Activated CD4-positive, alpha-beta T cell treated with anti-CD3 and anti-CD28 coated beads for 36 hours (primary cell): ENCODE measurements at regions of chr11 and their contacts with region 1.

Region 1: GRCh38 chr11:119481021-119481666 is 58.2 kb upstream of the THY1 start:
- DNase-seq: peak; percentile 88
- ATAC-seq: peak; percentile 92
- H3K4me3 Mint-ChIP-seq: no peak overlapping the region
- H3K27ac Mint-ChIP-seq: no peak overlapping the region
- H3K4me1 Mint-ChIP-seq: no peaks in the 10 kb centered on the region
- H3K27me3 Mint-ChIP-seq: peaks cover 21% of the 10 kb centered on the region

Region 2: DNA sequence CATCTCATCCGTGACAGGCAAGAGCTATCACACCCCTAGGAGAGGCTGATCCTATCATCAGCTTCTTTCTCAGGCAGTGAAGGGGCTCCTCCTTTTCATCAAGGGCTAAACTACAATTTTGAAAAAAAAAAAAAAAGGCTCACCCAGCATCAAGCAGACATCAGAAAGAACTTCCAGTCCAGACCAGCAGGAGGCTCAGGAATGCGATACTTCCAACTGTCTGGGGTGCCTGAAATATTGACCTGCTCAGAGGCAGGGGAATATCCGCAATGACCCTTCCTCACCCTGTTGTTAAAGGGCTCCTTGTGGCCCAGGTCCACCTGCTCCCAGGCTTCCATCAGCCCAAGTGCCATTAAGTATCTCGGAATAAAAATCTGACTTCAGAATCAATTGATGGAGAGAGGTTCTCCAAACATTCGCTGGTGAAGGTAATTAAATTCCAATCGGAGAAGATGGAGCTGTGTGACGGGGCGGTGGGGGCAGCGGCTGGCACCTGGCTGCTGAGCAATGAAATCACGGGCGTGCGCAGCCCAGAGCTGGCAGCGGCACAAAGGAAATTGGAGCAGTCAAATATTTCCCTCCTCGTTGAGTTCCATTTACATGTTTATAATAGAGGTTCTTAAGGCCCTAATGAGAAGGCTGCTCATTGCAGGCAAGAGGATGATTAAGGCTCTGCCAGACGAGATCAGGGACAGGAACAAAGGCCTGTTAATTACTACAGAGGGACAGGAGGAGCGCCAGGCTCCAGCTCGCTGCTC is 10.8 kb after region 1 on chr11:
- CTCF ChIA-PET with region 1: no interaction called
- POLR2A ChIA-PET with region 1: no interaction called
- intact Hi-C with region 1: no loop called
- DNase-seq: no peak
- ATAC-seq: no peak
- H3K4me3 Mint-ChIP-seq: no peak overlapping the region
- H3K27ac Mint-ChIP-seq: no peak overlapping the region
- H3K4me1 Mint-ChIP-seq: no peaks in the 10 kb centered on the region
- H3K27me3 Mint-ChIP-seq: peaks cover 3% of the 10 kb centered on the region

Region 3: DNA sequence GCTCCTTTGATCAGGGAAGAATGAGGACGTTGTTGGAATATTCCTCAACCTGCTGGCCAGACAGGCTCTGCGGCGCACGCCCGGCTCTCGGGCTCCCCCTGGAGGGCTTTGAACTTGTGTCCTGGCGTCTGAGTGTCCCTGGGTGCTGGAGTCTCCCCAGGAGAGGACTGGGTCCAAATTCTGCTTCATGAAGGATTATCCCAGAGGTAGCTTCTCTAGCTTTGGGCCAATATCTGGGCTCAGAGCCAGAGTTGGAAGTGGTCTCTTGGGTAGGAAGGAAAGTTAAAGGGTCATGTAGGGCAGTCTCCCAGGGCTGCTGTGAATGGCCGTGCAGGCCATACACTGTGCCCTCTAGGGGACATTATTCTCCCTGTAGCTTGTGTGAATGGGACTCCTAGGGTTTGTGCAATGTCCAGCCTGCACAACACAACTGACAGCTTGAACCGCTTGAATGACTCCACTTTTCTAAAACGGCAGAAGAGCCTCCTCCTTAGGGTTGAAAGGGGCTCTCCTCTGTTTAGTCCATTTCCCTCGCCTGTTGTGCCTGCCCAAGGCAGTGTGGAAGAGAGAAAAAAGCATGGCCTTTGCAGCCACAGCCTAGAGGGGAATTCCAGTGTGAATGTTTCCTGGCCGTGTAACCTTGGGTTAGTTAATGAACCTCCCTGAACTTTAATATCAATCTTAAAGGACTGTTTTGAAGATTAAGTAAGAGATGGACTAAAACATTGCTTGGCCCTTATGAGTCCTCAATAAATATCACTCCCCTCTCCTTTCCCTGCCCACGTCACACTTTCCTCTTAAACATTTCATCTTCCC is 53.0 kb after region 1 on chr11:
- CTCF ChIA-PET with region 1: interaction called, 11 read pairs
- POLR2A ChIA-PET with region 1: no interaction called
- intact Hi-C with region 1: loop called (anchors 1 kb)
- DNase-seq: peak; percentile 79
- ATAC-seq: peak; percentile 86
- H3K4me3 Mint-ChIP-seq: no peak overlapping the region
- H3K27ac Mint-ChIP-seq: no peak overlapping the region
- H3K4me1 Mint-ChIP-seq: no peaks in the 10 kb centered on the region
- H3K27me3 Mint-ChIP-seq: peaks cover 16% of the 10 kb centered on the region

Region 4: DNA sequence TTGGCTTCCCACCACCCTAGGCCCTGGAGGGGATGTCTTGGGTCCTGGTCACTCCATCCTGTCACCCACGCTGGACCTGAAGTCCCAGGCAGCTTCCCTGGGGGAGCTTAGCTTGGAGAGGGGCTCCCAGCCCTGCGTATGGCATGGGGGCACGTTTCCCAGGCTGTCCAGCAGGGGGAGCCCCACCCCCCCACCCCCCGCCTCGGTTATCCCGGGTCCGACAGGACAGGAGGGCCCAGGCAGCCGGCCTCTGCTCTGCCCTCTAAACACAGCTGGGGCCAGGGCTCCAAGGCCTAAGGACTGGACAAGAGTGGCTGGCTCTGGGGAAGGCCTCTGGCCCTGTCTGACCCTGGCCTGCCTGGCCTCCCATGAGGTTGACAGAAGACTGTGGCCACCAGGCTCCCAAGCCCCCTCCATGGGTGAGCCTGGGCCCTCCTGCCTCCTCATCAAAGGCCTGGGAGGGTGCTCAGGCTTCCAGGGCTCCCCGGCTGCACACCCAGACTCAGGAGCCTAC is 143.0 kb after region 1 on chr11:
- CTCF ChIA-PET with region 1: no interaction called
- POLR2A ChIA-PET with region 1: no interaction called
- intact Hi-C with region 1: loop called in 1 of 2 experiments (anchors 5 kb)
- DNase-seq: peak; percentile 14
- ATAC-seq: no peak
- H3K4me3 Mint-ChIP-seq: no peak overlapping the region
- H3K27ac Mint-ChIP-seq: no peak overlapping the region
- H3K4me1 Mint-ChIP-seq: no peaks in the 10 kb centered on the region
- H3K27me3 Mint-ChIP-seq: peaks cover 10% of the 10 kb centered on the region

Region 5: GRCh38 chr11:119741369-119742262 is 260.5 kb after region 1 on chr11:
- CTCF ChIA-PET with region 1: interaction called, 4 read pairs
- POLR2A ChIA-PET with region 1: no interaction called
- intact Hi-C with region 1: loop called in 1 of 2 experiments (anchors 1 kb)
- DNase-seq: peak; percentile 79
- ATAC-seq: peak; percentile 83
- H3K4me3 Mint-ChIP-seq: no peak overlapping the region
- H3K27ac Mint-ChIP-seq: no peak overlapping the region
- H3K4me1 Mint-ChIP-seq: peaks cover 10% of the 10 kb centered on the region
- H3K27me3 Mint-ChIP-seq: peaks cover 39% of the 10 kb centered on the region

Region 6: DNA sequence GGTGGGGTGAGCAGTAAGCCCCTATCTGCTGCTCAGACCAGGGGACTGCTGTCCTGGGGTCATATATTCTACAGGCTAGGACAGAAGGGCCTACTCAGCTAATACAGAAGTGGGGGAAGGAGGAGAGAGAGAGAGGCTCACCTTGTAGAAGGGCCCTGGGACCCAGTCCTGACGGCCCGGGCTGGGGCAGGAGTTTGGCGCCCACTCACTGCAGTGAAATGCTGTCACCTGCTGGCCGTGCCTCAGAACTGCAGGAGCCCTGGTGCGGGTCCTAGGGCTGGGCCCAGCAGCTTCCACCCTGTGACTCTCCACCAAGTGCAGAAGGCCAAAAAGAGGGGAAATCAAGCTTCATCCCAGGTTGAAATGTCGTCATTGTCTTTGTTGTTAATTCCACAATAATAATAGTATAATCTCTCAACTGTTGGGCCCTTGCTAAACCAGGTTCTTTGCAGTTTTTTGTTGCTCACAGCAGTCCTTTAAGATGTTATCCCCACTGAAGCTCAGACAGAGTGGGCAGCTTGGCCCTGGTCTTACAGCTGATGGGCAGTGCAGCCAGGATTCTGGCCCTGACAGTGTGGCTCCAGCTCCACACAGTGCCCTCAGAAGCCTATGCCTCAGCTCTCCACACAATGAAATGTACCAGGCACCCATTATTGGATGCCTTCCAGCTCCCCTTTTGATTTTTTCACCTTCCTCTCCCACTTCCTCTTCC is 627.2 kb after region 1 on chr11:
- CTCF ChIA-PET with region 1: interaction called, 4 read pairs
- POLR2A ChIA-PET with region 1: no interaction called
- intact Hi-C with region 1: loop called (anchors 1 to 5 kb)
- DNase-seq: peak; percentile 80
- ATAC-seq: peak; percentile 86
- H3K4me3 Mint-ChIP-seq: no peak overlapping the region
- H3K27ac Mint-ChIP-seq: no peak overlapping the region
- H3K4me1 Mint-ChIP-seq: no peaks in the 10 kb centered on the region
- H3K27me3 Mint-ChIP-seq: peaks cover 4% of the 10 kb centered on the region